Left ventricle myocardium inferior (tissue), 1 donor: ENCODE measurements at regions of chr16 and their contacts with region 1.

Region 1: DNA sequence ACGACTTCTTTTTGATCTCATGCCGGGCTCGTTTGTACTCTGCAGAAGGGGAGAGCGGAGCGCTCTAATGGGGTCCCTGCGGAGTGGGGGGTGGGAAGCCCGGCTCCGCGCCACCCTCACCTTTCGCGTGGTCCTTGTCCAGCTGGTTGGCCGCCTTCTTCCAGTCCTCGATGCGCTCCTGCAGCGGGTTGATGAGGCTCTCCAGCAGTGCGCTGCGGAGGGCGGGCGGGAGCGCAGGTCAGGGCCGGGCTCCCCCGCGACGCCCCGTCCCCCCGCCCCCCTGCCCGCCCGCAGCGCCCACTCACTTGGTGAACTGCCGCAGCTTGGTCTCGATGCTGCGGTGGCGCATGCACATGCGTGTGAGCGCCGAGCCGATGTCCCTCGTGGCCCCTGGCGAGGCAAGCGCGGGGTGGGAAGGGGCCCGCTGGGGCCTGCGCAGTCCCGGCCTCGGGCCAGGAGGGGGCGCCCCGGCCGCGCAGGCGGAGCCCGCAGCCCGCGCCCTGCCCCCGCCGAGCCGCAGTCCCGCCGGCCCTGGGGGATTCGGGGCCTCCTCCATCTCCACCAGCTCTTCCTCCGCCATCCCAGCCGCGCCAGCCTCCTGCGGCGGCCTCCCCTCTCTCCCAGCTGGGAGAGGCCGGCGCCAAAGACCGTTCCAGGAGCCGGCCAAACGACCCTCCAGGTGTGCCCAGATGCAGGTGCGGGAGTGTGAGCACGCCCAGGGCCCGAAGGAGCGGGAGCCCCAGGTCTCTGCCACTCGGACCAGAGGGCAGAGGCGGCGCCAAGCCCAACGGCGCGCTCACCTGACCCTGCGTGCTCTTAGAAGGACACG is 6.0 kb downstream of the MTSS2 start:
- DNase-seq: peak; percentile 45
- H3K4me3 ChIP-seq: peak overlapping the region; percentile 15
- H3K27ac ChIP-seq: peak overlapping the region; percentile 93
- H3K4me1 ChIP-seq: peaks cover 88% of the 10 kb centered on the region
- H3K27me3 ChIP-seq: no peaks in the 10 kb centered on the region
- CTCF ChIP-seq: peak; percentile 77

Region 2: GRCh38 chr16:70759666-70760065 is 79.8 kb after region 1 on chr16:
- intact Hi-C with region 1: no loop called
- DNase-seq: no peak
- H3K4me3 ChIP-seq: no peak overlapping the region
- H3K27ac ChIP-seq: no peak overlapping the region
- H3K4me1 ChIP-seq: no peaks in the 10 kb centered on the region
- H3K27me3 ChIP-seq: no peaks in the 10 kb centered on the region
- CTCF ChIP-seq: no peak

Region 3: GRCh38 chr16:70770626-70771552 is 91.0 kb after region 1 on chr16:
- intact Hi-C with region 1: loop called (anchors 5 kb)
- DNase-seq: peak; percentile 46
- H3K4me3 ChIP-seq: no peak overlapping the region
- H3K27ac ChIP-seq: no peak overlapping the region
- H3K4me1 ChIP-seq: peaks cover 11% of the 10 kb centered on the region
- H3K27me3 ChIP-seq: no peaks in the 10 kb centered on the region
- CTCF ChIP-seq: peak; percentile 98